IMR-90 (cell line): ENCODE measurements at regions of chr2 and their contacts with region 1.

Region 1: DNA sequence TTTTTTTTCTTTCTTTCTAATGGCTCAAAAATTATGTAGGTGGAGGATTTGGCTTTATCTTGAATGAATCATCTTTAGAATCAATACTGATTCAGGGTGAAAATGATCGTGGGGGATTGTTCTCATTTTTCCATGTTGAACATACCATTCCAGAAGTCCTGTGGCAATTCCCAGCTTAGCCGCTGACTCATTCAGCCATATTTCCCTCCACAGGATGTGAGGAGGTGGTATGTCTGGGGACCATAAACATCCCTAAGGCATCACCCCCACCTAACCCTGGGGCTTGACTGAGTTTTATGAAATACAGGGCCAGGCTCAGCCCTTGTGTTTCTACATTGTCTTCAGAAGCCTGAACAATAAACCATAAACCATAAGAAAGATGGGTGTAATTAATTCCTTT is 92.7 kb upstream of the FN1 start:
- DNase-seq: peak; percentile 99
- ATAC-seq: peak; percentile 70
- H3K4me3 ChIP-seq: no peak overlapping the region
- H3K27ac ChIP-seq: peak overlapping the region; percentile 94; the same call in 1 of the 2 replicates
- H3K4me1 ChIP-seq: peaks cover 17% of the 10 kb centered on the region
- H3K27me3 ChIP-seq: no peaks in the 10 kb centered on the region
- CTCF ChIP-seq: no peak
- POLR2A ChIP-seq: no peak
- RAD21 ChIP-seq: peak; percentile 50

Region 2: DNA sequence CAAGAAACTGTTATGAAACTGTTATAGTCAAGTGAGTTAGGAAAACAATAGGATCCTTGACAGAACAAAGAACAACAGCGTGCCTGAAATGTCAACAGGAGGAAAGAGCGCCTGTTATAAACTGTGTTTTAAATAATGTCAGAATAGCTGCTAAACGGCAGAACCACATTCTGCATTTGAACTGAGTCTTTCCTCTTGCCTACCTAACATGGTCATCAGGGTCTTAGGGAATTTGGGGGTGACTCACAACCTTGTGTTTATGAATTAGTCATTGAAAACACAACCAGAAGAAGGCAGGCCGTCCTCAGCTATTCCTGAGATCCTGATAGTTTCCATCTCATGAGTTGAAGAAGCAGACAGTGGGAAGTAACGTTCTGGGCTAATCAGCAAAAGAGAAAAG is 129.3 kb after region 1 on chr2:
- CTCF ChIA-PET with region 1: no interaction called
- POLR2A ChIA-PET with region 1: no interaction called
- dilution Hi-C with region 1: no loop called
- in situ Hi-C with region 1: no loop called
- intact Hi-C with region 1: loop called (anchors 5 kb)
- DNase-seq: peak; percentile 99
- ATAC-seq: peak; percentile 89
- H3K4me3 ChIP-seq: no peak overlapping the region
- H3K27ac ChIP-seq: peak overlapping the region; percentile 4
- H3K4me1 ChIP-seq: peaks cover 16% of the 10 kb centered on the region
- H3K27me3 ChIP-seq: no peaks in the 10 kb centered on the region
- CTCF ChIP-seq: peak; percentile 8; the same call in 1 of the 2 replicates
- POLR2A ChIP-seq: no peak; the same call in 1 of the 2 replicates
- RAD21 ChIP-seq: peak; percentile 53

Region 3: GRCh38 chr2:215793747-215794595 is 265.4 kb after region 1 on chr2:
- CTCF ChIA-PET with region 1: no interaction called
- POLR2A ChIA-PET with region 1: no interaction called
- dilution Hi-C with region 1: no loop called
- in situ Hi-C with region 1: no loop called
- intact Hi-C with region 1: loop called (anchors 5 kb)
- DNase-seq: peak; percentile 98
- ATAC-seq: peak; percentile 84
- H3K4me3 ChIP-seq: no peak overlapping the region
- H3K27ac ChIP-seq: peak overlapping the region; percentile 48; the same call in 1 of the 2 replicates
- H3K4me1 ChIP-seq: peaks cover 11% of the 10 kb centered on the region
- H3K27me3 ChIP-seq: no peaks in the 10 kb centered on the region
- CTCF ChIP-seq: no peak
- POLR2A ChIP-seq: no peak
- RAD21 ChIP-seq: no peak